ENCODE measurements at regions of chr1 and their contacts with region 1.

Region 1: DNA sequence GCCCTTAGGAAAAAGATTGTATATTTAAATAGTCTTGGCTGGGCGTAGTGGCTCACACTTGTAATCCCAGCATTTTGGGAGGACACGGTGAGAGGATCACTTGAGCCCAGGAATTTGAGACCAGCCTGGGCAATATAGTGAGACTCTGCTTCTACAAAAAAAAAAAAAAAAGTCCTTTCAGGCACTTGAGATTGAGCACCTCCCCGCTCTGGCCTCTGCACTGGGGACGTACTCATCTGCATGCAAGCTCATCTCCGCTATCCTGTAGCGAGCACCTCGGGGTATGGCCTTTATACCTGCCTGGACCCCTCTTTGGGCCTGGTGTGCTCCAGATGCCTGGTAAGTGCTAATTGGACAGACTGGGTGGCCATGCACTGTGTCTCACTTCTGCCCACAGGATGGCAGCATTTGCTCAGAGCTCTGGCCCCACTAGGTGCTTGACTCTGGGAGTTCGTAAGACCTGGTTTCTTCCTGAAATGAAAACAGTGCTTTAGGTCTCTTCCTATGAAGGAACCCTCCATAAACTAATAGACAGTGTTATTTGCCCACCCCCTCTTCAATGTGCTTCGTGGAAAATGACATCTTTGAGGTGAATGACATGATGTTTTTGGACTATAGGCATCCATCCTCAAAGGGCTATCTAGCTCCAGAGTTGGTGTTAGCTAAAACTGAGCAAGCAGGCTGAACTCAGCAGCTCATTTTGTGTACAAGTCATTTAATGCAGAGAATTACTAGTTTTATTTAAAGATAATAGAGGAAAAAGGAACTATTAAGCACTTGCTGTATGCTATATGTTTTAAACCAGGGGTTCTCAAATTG is 61.7 kb upstream of the ADAR start:
- DNase-seq: peak; percentile 88
- ATAC-seq: peak; percentile 100
- H3K4me3 Mint-ChIP-seq: no peak overlapping the region
- H3K27ac Mint-ChIP-seq: no peak overlapping the region
- H3K4me1 Mint-ChIP-seq: peaks cover 17% of the 10 kb centered on the region
- H3K27me3 Mint-ChIP-seq: peaks cover 2% of the 10 kb centered on the region

Region 2: GRCh38 chr1:154639876-154640275 is 29.8 kb before region 1 on chr1:
- CTCF ChIA-PET with region 1: no interaction called
- POLR2A ChIA-PET with region 1: interaction called, 10 read pairs
- intact Hi-C with region 1: no loop called
- DNase-seq: no peak
- ATAC-seq: no peak
- H3K4me3 Mint-ChIP-seq: no peak overlapping the region
- H3K27ac Mint-ChIP-seq: no peak overlapping the region
- H3K4me1 Mint-ChIP-seq: no peaks in the 10 kb centered on the region
- H3K27me3 Mint-ChIP-seq: peaks cover 16% of the 10 kb centered on the region

Region 3: GRCh38 chr1:154747740-154748404 is 78.2 kb after region 1 on chr1:
- CTCF ChIA-PET with region 1: interaction called, 39 read pairs
- POLR2A ChIA-PET with region 1: no interaction called
- intact Hi-C with region 1: loop called (anchors 1 kb)
- DNase-seq: peak; percentile 80
- ATAC-seq: peak; percentile 78
- H3K4me3 Mint-ChIP-seq: peak overlapping the region; percentile 80
- H3K27ac Mint-ChIP-seq: peak overlapping the region; percentile 98
- H3K4me1 Mint-ChIP-seq: peaks cover 80% of the 10 kb centered on the region
- H3K27me3 Mint-ChIP-seq: no peaks in the 10 kb centered on the region

Region 4: GRCh38 chr1:155084722-155085503 is 415.2 kb after region 1 on chr1:
- CTCF ChIA-PET with region 1: no interaction called
- POLR2A ChIA-PET with region 1: no interaction called
- intact Hi-C with region 1: no loop called
- DNase-seq: peak; percentile 97
- ATAC-seq: peak; percentile 78
- H3K4me3 Mint-ChIP-seq: peak overlapping the region; percentile 82
- H3K27ac Mint-ChIP-seq: peak overlapping the region; percentile 91
- H3K4me1 Mint-ChIP-seq: peaks cover 36% of the 10 kb centered on the region
- H3K27me3 Mint-ChIP-seq: peaks cover 27% of the 10 kb centered on the region